MCF 10A (cell line): ENCODE measurements at regions of chr22 and their contacts with region 1.

Region 1: DNA sequence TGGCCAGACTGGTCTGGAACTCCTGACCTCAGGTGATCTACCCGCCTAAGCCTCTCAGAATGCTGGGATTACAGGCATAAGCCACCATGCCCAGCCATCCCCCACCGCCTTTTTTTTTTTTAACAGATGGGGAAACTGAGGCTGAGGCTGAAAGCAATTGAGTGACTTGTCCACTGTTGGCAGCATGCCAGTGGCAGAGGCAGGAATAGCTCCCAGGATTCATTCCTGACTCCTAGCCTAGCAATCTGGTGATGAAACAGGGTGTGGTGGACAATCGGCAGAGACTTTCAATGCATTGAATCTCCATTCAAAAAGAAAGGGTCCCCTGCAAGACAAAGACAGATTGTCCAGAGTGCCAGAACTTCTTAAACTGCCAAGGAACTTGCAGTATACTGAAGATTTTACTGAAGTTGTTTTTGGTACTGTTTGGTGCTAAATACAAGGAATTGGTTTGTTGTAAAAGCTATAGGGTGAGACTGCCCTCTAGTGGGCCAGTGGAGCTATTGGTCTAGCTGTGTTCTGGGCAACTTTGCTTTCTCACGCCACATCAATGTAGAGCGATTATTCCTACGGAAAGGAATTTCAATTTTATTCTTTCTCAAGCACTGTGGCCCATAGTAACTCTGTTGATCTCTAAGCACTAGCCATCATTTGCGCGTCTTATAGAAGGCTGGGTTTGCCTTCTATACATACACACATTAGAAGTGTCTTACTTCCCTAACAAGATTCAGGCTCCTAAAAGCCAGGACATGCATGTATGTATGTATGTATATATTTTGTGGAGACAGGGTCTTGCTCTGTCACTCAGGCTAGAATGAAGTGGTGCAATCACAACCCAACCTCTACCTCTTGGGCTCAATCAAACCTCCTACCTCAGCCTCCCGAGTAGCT is 21.0 kb downstream of the C22orf31 start:
- DNase-seq: peak; percentile 78
- H3K4me3 Mint-ChIP-seq: no peak overlapping the region
- H3K27ac Mint-ChIP-seq: no peak overlapping the region
- H3K4me1 Mint-ChIP-seq: no peaks in the 10 kb centered on the region
- H3K27me3 Mint-ChIP-seq: no peaks in the 10 kb centered on the region
- CTCF ChIP-seq: peak; percentile 91

Region 2: GRCh38 chr22:28800308-28801077 is 240.1 kb before region 1 on chr22 and contains the start of gene XBP1:
- CTCF ChIA-PET with region 1: interaction called, 11 read pairs
- POLR2A ChIA-PET with region 1: interaction called, 3 read pairs
- intact Hi-C with region 1: no loop called
- DNase-seq: peak; percentile 94
- H3K4me3 Mint-ChIP-seq: peak within 1 kb of the TSS; percentile 87
- H3K27ac Mint-ChIP-seq: peak within 1 kb of the TSS; percentile 97
- H3K4me1 Mint-ChIP-seq: peaks cover 13% of the 10 kb centered on the region
- H3K27me3 Mint-ChIP-seq: no peaks in the 10 kb centered on the region
- CTCF ChIP-seq: no peak
- total RNA-seq, gene XBP1: 274 and 429 TPM in 2 replicates

Region 3: DNA sequence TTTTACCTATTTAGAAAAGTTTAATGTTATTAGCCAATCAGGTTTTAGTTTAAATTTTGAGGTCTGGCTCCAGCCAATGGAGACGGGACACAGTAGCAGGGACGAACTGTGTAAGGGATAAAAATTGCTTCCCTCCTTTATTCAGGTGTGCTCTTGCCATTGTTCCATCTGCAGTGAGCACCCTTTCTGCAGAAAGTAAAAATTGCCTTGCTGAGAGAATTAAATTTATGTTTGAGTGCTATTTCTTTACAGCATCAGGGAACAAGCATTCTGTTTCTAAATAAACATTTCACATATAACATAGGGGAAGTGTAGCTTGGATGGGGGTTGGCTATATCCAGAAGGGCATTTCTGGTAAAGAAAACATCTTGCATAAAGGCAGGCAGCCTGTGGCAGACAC is 193.6 kb before region 1 on chr22:
- CTCF ChIA-PET with region 1: interaction called, 29 read pairs
- POLR2A ChIA-PET with region 1: no interaction called
- intact Hi-C with region 1: no loop called
- DNase-seq: no peak
- H3K4me3 Mint-ChIP-seq: no peak overlapping the region
- H3K27ac Mint-ChIP-seq: no peak overlapping the region
- H3K4me1 Mint-ChIP-seq: no peaks in the 10 kb centered on the region
- H3K27me3 Mint-ChIP-seq: no peaks in the 10 kb centered on the region
- CTCF ChIP-seq: no peak

Region 4: DNA sequence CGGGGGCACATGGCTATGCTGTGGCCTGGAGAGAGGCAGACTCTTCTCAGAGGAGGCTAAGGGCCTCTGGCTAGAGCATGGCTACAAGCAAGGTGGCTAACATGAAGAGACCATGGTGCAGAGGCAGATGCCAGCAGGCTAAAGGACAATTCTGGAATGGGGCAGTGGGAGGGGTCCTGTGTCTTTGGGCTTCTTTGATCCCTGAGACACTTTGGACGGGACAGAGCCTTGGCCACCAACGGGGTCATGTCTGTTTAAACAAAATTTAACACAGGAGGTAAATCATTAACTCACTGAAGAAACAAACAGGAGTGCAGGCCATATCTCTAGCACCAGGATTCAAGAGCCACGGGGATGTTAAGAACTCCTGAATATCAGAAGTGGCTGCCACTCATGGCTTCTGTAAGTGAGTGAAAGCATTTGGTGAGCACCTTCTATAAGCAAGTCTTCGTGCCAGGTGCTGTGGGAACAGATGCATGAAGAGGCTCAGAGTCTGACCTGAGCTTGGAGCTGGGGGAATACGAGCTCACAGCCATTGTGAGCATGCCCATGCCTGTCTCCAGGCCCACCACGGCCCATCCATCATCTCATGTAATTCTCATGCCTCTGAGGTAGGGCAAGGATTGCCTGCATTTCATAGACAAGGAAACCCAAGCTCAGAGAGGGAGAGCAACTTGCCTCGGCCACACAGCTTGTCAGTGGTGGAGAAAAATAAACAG is 175.6 kb before region 1 on chr22:
- CTCF ChIA-PET with region 1: interaction called, 113 read pairs
- POLR2A ChIA-PET with region 1: no interaction called
- intact Hi-C with region 1: no loop called
- DNase-seq: no peak
- H3K4me3 Mint-ChIP-seq: no peak overlapping the region
- H3K27ac Mint-ChIP-seq: no peak overlapping the region
- H3K4me1 Mint-ChIP-seq: no peaks in the 10 kb centered on the region
- H3K27me3 Mint-ChIP-seq: no peaks in the 10 kb centered on the region
- CTCF ChIP-seq: no peak

Region 5: DNA sequence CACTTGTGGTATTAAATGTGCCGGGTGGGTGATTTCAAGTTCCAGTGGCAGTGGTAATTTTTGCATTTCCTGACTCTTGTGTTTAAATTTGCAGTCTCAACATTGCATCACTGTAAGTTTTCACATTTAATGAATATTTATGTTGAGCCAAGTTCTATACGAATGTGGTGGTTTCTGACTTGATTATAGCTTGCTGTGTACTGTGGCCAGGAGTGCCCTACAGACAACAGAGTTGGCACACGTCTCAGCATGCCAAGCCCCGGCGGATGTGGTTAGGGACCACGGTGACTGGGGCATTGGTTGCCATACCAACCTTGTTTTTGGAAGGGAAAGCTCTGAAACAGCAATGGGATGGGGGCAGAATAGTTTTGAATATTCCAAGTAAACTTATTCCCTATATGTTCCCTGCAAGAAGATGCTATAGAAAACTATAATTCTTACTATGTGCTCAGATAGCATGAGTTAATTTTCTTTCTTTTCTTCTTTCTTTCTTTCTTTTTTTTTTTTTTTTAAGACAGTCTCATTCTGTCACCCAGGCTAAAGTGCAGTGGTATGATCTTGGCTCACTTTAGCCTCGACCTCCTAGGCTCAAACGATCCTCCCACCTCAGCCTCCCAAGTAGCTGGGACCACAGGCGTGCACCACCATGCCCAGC is 141.3 kb before region 1 on chr22:
- CTCF ChIA-PET with region 1: interaction called, 10 read pairs
- POLR2A ChIA-PET with region 1: interaction called, 4 read pairs
- intact Hi-C with region 1: no loop called
- DNase-seq: peak; percentile 70
- H3K4me3 Mint-ChIP-seq: no peak overlapping the region
- H3K27ac Mint-ChIP-seq: peak overlapping the region; percentile 27
- H3K4me1 Mint-ChIP-seq: peaks cover 21% of the 10 kb centered on the region
- H3K27me3 Mint-ChIP-seq: no peaks in the 10 kb centered on the region
- CTCF ChIP-seq: no peak

Region 6: GRCh38 chr22:29083933-29084591 is 43.4 kb after region 1 on chr22:
- CTCF ChIA-PET with region 1: no interaction called
- POLR2A ChIA-PET with region 1: no interaction called
- intact Hi-C with region 1: no loop called
- DNase-seq: no peak
- H3K4me3 Mint-ChIP-seq: no peak overlapping the region
- H3K27ac Mint-ChIP-seq: no peak overlapping the region
- H3K4me1 Mint-ChIP-seq: peaks cover 6% of the 10 kb centered on the region
- H3K27me3 Mint-ChIP-seq: no peaks in the 10 kb centered on the region
- CTCF ChIP-seq: no peak

Region 7: DNA sequence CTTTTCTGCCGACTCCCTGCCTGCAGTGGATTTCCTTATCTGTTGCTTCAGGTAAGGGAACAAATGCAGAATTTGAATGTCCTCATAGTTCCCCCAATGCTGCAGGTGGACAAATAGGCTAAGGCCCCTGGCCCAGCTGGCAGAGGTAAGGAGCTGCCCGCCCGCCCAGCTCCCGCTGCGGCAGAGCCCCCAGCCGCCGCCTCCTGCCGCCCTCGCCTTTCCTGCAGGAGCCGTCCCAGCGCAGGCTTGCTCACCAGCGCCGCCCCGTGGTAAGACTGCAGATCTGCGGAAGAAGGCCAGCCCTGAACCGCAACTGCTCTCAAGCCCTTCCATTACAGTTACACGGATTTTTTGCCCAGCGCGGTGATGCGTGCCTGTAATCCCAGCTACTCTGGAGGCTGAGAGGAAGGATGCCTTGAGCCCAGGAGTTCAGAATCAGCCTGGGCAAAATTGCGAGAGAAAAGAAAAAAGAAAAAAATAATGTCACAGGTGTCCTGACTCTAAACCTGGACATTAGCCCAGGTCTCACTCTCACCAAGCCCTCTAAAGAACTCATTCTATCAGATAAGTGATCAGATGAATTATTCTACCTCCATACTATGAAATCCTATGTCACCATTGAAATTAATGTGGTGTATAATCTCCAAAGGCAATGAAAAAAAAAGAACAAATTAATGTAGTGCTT is 113.9 kb after region 1 on chr22:
- CTCF ChIA-PET with region 1: interaction called, 3 read pairs
- POLR2A ChIA-PET with region 1: no interaction called
- intact Hi-C with region 1: loop called (anchors 5 kb)
- DNase-seq: peak; percentile 66
- H3K4me3 Mint-ChIP-seq: no peak overlapping the region
- H3K27ac Mint-ChIP-seq: no peak overlapping the region
- H3K4me1 Mint-ChIP-seq: peaks cover 6% of the 10 kb centered on the region
- H3K27me3 Mint-ChIP-seq: peaks cover under 1% of the 10 kb centered on the region
- CTCF ChIP-seq: peak; percentile 86